Sigmoid colon (tissue), 7 donors: ENCODE measurements at regions of chr13 and their contacts with region 1.

Region 1: DNA sequence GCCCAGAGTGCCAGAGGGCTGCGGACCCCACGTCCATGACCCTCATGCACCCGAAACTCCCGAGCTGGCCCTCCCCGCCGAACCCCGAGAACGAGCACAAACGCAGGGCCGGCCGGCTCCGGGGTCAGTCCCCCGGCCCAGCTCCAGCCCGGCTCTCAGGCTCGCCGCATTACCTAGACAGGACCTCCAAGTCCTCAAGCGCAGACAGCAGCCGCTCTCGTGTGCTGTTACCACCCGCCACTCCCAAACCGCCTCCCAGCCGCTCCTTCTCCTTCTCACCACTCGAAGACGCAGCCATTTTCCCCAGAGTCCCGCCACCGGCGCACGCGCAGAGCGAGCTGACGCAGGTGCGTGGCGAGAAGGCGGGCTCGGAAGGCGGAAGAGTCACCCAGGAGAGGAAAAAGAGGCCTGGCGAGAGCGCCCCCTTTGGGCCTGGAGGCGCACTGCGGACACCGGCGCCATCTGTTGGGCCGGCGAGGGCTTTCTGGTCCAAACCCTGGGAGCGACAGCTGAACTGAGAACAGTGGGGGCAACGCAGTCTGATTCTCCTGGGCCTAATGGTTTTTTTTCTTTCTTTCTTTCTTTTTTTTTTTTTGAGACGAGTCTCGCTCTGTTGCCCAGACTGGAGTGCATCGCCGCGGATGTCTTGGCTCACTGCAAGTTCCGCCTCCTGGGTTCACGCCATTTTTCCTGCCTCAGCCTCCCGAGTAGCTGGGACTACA is at the start of gene MED4:
- DNase-seq: peak; percentile 96
- H3K4me3 ChIP-seq: peak within 1 kb of the TSS; percentile 80 to 95 (median 90)
- H3K27ac ChIP-seq: peak within 1 kb of the TSS; percentile 78 to 88 (median 88)
- H3K4me1 ChIP-seq: peaks cover 0 to 40% (median 25%) of the 10 kb centered on the region in 4 donors
- H3K27me3 ChIP-seq: no peaks in the 10 kb centered on the region
- CTCF ChIP-seq: peak; percentile 96 to 99 (median 98)
- EP300 ChIP-seq: peak in 1 of 4 donors; percentile 74
- POLR2A ChIP-seq: peak; percentile 88 to 90
- total RNA-seq, gene MED4: 38.5 to 63.5 (median 43.5) TPM

Region 2: GRCh38 chr13:48037346-48038173 is 57.4 kb before region 1 on chr13 and contains the start of gene NUDT15:
- intact Hi-C with region 1: loop called (anchors 5 kb)
- DNase-seq: peak; percentile 96
- H3K4me3 ChIP-seq: peak within 1 kb of the TSS; percentile 62 to 78 (median 77)
- H3K27ac ChIP-seq: peak within 1 kb of the TSS; percentile 91 to 97 (median 96)
- H3K4me1 ChIP-seq: peaks cover 0 to 14% (median 14%) of the 10 kb centered on the region in 4 donors
- H3K27me3 ChIP-seq: no peaks in the 10 kb centered on the region
- CTCF ChIP-seq: peak; percentile 88 to 98 (median 98)
- EP300 ChIP-seq: peak in 3 of 4 donors; percentile 33 to 81 (median 76)
- POLR2A ChIP-seq: peak; percentile 59 to 66
- total RNA-seq, gene NUDT15: 6.6 to 8.9 (median 7.8) TPM

Region 3: GRCh38 chr13:48126944-48127830 is 32.2 kb after region 1 on chr13:
- intact Hi-C with region 1: loop called (anchors 2 kb)
- DNase-seq: peak; percentile 87
- H3K4me3 ChIP-seq: no peak overlapping the region
- H3K27ac ChIP-seq: peak overlapping the region; percentile 83 to 86 (median 84)
- H3K4me1 ChIP-seq: peaks cover 0 to 56% (median 48%) of the 10 kb centered on the region in 4 donors
- H3K27me3 ChIP-seq: no peaks in the 10 kb centered on the region
- CTCF ChIP-seq: peak; percentile 32 to 74 (median 66)
- EP300 ChIP-seq: peak in 1 of 4 donors; percentile 12
- POLR2A ChIP-seq: no peak

Region 4: DNA sequence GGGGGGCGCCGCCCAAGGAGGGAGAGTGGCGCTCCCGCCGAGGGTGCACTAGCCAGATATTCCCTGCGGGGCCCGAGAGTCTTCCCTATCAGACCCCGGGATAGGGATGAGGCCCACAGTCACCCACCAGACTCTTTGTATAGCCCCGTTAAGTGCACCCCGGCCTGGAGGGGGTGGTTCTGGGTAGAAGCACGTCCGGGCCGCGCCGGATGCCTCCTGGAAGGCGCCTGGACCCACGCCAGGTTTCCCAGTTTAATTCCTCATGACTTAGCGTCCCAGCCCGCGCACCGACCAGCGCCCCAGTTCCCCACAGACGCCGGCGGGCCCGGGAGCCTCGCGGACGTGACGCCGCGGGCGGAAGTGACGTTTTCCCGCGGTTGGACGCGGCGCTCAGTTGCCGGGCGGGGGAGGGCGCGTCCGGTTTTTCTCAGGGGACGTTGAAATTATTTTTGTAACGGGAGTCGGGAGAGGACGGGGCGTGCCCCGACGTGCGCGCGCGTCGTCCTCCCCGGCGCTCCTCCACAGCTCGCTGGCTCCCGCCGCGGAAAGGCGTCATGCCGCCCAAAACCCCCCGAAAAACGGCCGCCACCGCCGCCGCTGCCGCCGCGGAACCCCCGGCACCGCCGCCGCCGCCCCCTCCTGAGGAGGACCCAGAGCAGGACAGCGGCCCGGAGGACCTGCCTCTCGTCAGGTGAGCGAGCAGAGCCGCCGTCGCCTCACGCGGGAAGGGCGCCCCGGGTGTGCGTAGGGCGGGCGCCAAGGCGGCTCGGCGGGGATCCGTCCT is 208.6 kb after region 1 on chr13 and contains the start of gene RB1:
- intact Hi-C with region 1: loop called (anchors 5 kb)
- DNase-seq: peak; percentile 97
- H3K4me3 ChIP-seq: peak within 1 kb of the TSS; percentile 81 to 95 (median 84)
- H3K27ac ChIP-seq: peak within 1 kb of the TSS; percentile 96 to 99 (median 98)
- H3K4me1 ChIP-seq: peaks cover 0 to 31% (median 26%) of the 10 kb centered on the region in 4 donors
- H3K27me3 ChIP-seq: no peaks in the 10 kb centered on the region
- CTCF ChIP-seq: no peak
- EP300 ChIP-seq: peak in 1 of 4 donors; percentile 76
- POLR2A ChIP-seq: peak; percentile 96 to 98
- total RNA-seq, gene RB1: 26.0 to 35.6 (median 32.3) TPM

Region 5: DNA sequence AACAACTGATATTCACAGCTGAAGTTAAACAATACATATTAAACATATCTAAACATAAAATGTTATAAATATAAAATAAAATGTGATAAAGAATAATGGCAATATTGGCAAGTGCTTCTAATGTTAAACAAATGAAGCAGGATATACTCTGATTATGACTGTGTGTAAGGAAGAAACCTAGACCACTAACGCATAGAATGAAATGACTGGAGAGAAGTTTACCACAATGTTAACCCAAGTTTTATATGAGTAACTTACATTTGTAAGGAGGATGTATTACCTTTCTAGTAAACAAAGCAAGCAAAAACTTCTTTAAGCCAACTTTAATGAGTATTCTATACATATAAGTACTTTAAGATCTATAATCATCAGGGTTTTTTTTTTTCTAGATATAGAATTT is 251.6 kb after region 1 on chr13:
- intact Hi-C with region 1: no loop called
- DNase-seq: no peak
- H3K4me3 ChIP-seq: no peak overlapping the region
- H3K27ac ChIP-seq: no peak overlapping the region
- H3K4me1 ChIP-seq: no peaks in the 10 kb centered on the region
- H3K27me3 ChIP-seq: no peaks in the 10 kb centered on the region
- CTCF ChIP-seq: no peak
- EP300 ChIP-seq: no peak
- POLR2A ChIP-seq: no peak